ENCODE measurements at regions of chr17 and their contacts with region 1.

Region 1: DNA sequence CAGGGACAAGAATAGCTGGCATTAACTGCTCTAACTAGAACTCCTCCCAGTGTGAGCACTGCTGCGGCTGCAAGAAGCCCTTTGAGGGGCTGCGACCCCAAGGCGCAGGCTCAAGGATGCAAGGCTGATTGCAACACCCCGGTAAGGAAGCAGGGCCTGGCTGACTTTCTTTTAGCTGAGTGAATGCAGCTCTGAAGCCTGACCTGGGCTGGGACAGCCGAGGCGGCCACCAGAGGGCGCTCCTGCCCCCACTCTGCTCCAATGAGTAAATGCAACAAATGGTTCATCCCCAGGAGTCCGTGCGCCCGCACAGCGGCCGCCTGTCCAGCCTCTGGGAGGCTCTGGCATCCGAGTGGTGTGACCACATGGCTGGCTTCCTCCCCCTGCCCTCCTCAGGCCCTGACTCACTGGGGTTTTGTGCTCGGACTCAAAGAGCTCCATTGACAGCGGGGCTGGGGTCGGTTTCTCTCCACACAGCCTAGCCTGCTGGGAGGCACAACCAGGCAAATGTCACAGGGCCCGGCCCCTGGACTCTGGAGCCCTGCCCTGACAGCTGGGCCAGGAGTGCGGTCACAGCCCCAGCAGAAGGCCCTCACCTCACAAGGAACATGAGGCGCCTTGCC is at the start of gene SMIM5:
- DNase-seq: peak; percentile 75 to 86 (median 80)
- H3K4me3 ChIP-seq: peak within 1 kb of the TSS in 3 of 7 experiments; percentile 19 to 46 (median 39)
- H3K27ac ChIP-seq: no peak within 1 kb of the TSS
- H3K4me1 ChIP-seq: peaks cover 0 to 44% (median 36%) of the 10 kb centered on the region in 4 experiments
- H3K27me3 ChIP-seq: no peaks in the 10 kb centered on the region

Region 2: DNA sequence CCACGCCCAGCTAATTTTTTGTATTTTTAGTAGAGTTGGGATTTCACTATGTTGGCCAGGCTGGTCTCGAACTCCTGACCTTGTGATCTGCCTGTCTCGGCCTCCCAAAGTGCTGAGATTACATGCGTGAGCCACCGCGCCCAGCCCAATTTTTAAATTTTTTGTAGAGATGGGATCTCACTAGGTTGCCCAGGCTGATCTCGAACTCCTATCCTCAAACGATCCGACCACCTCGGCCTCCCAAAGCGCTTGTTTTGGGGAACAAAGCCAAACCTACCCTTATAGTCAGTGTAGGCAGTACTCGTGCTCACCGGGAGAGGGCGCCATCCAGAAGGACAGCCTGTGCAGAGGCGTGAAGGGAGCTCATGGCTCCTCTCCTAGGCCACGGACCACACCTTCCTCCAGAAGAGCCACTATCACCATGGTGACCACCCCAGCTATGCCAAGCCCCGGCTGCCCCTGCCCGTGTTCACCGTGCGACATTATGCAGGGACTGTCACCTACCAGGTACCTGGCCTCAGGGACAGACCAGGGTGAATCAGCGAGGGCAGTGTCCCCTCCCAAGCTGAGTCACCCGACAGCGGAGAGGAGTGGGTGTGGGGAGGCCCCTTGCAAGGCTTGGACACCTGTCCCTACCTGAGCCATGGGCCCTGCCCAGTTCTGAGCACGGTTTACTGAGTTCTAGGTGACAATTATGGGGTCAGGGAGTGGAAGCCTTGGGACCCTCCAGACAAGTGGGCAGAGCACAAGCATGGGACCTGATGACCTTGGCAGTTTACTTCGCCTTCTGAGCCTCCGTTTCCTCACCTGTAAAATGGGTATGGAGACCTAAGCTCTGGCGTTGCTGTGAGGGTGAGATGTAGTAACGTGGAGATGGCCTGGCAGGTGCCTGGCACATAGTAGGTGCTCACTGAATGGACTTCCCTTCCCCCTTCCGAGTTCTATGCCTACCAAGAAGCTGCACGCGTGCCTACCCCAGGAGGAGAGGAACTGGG is 31.6 kb before region 1 on chr17:
- CTCF ChIA-PET with region 1: interaction called, 30 read pairs
- POLR2A ChIA-PET with region 1: no interaction called
- DNase-seq: peak; percentile 71 to 84 (median 83)
- H3K4me3 ChIP-seq: no peak overlapping the region
- H3K27ac ChIP-seq: no peak overlapping the region
- H3K4me1 ChIP-seq: no peaks in the 10 kb centered on the region
- H3K27me3 ChIP-seq: no peaks in the 10 kb centered on the region

Region 3: GRCh38 chr17:75645889-75646637 is 13.1 kb after region 1 on chr17:
- CTCF ChIA-PET with region 1: interaction called, 834 read pairs
- POLR2A ChIA-PET with region 1: interaction called, 13 read pairs
- DNase-seq: peak; percentile 86 to 92 (median 87)
- H3K4me3 ChIP-seq: peak overlapping the region in 4 of 7 experiments; percentile 7 to 59 (median 40)
- H3K27ac ChIP-seq: peak overlapping the region; percentile 95 to 96
- H3K4me1 ChIP-seq: peaks cover 7 to 39% (median 24%) of the 10 kb centered on the region in 4 experiments
- H3K27me3 ChIP-seq: no peaks in the 10 kb centered on the region

Region 4: DNA sequence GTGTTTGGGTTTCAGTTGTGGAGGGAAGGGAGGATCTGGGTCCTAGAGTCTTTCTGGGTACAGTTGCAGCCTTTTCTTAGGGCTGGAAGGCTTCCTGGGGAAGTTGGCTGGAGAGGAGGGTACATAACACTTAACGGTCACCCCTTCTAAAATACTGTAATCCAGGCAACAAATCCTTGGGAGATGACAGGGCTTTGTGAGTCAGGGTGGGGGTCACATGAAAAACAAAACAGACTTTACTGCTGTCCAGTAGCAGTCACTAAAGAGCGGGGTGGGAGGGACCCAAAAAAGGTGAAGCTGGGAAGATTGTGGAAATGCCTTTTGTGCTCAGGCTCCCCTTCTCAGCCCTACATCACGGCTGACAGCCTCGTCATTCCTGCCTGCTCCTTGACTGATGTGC is 40.5 kb after region 1 on chr17:
- CTCF ChIA-PET with region 1: interaction called, 14 read pairs
- POLR2A ChIA-PET with region 1: no interaction called
- DNase-seq: no peak
- H3K4me3 ChIP-seq: no peak overlapping the region
- H3K27ac ChIP-seq: no peak overlapping the region
- H3K4me1 ChIP-seq: peaks cover 0 to 4% (median under 1%) of the 10 kb centered on the region in 4 experiments
- H3K27me3 ChIP-seq: no peaks in the 10 kb centered on the region

Region 5: DNA sequence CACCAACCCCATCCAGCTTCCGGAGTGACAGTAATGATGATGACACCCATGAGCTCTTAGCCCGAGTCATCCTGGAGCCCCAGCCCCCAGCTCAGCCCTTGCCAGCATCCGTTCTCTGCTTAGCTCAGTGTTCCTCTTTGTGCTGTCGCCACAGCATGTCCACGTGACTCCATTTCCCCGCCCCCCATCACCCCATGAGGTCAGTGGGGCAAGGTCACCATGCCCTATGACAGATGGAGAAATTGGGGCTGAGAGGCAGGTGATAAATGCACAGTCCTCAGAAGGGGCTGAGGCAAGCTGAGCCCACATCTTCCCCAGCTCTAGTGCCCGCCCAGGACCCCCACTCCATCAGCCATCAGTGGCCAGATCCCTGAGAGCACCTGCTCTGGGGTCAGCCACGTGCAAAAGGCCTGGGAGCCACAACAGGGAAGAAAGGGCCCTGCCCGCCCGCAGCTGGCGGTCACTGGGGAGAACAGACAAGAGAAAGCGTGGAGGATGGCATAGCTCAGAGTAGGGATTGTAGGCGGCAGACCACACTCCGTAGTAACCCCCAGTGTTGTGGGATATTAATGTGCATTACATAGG is 105.3 kb after region 1 on chr17:
- CTCF ChIA-PET with region 1: interaction called, 229 read pairs
- POLR2A ChIA-PET with region 1: no interaction called
- DNase-seq: peak in 2 of 3 donors; percentile 56 to 62
- H3K4me3 ChIP-seq: no peak overlapping the region
- H3K27ac ChIP-seq: no peak overlapping the region
- H3K4me1 ChIP-seq: peaks cover 0 to 11% (median 6%) of the 10 kb centered on the region in 4 experiments
- H3K27me3 ChIP-seq: no peaks in the 10 kb centered on the region